ENCODE measurements at regions of chr17 and their contacts with region 1.

Region 1: DNA sequence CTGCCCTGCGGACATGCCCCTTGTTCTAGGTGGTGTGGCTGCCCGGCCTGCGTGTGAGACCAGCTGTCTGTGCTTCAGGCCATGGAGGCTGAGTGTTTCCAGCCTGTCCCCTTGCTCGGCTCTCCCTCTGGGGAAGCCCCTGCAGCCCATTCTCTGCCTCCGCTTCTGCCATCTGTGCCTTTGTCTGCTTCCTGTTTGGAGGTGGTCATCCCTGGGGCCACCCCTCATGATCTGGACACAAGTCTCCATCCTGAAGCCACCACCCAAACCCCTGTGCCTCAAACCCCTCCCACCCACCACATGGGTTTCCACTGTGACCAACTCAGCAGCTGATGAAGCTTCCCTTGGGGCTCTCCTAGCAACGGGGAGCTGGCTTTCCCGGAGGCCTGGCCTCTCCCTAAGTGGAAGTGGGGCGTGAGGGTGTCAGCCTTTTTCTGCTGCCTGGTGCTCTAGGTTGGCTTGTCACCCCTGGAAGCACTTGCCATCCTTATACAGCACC is 184.9 kb downstream of the SEC14L1 start:
- DNase-seq: no peak
- ATAC-seq: peak; percentile 6
- H3K4me3 Mint-ChIP-seq: peak overlapping the region; percentile 92
- H3K27ac Mint-ChIP-seq: peak overlapping the region; percentile 96
- H3K4me1 Mint-ChIP-seq: peaks cover 88% of the 10 kb centered on the region
- H3K27me3 Mint-ChIP-seq: no peaks in the 10 kb centered on the region
- CTCF ChIP-seq: no peak

Region 2: DNA sequence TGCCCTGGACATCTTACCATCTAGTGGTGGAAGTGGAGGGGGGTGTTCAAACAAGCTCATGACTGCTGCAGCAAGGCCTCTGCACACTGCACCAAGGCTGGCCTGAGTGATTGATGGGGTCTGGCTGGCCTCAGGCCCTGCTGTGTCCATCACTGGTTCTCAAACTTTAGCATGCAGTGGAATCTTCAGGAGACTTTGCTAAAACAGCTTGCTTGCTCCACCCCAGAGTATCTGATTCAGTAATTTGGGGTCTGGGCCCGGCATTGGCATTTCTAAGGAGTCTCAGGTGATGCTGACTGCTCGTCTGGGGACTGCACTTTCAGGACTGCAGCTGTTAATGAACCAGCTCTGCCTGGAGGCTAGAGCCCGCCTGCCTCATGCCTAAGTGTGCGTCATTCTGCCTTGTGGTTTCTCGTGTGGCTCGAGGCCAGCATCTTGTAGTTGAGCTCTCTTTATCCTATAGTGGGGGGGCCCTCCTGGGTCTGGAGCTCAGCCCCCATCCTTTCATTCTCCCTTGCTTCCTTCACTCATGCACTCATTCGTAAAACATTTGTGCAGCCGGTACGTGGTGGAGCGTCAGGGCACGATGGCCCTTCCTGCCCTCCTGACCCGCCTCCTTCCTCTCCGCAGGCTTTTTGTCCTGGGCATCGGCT is 453.3 kb before region 1 on chr17:
- CTCF ChIA-PET with region 1: no interaction called
- POLR2A ChIA-PET with region 1: no interaction called
- intact Hi-C with region 1: no loop called
- DNase-seq: no peak
- ATAC-seq: no peak
- H3K4me3 Mint-ChIP-seq: no peak overlapping the region
- H3K27ac Mint-ChIP-seq: no peak overlapping the region
- H3K4me1 Mint-ChIP-seq: peaks cover 10% of the 10 kb centered on the region
- H3K27me3 Mint-ChIP-seq: peaks cover 20% of the 10 kb centered on the region
- CTCF ChIP-seq: no peak

Region 3: DNA sequence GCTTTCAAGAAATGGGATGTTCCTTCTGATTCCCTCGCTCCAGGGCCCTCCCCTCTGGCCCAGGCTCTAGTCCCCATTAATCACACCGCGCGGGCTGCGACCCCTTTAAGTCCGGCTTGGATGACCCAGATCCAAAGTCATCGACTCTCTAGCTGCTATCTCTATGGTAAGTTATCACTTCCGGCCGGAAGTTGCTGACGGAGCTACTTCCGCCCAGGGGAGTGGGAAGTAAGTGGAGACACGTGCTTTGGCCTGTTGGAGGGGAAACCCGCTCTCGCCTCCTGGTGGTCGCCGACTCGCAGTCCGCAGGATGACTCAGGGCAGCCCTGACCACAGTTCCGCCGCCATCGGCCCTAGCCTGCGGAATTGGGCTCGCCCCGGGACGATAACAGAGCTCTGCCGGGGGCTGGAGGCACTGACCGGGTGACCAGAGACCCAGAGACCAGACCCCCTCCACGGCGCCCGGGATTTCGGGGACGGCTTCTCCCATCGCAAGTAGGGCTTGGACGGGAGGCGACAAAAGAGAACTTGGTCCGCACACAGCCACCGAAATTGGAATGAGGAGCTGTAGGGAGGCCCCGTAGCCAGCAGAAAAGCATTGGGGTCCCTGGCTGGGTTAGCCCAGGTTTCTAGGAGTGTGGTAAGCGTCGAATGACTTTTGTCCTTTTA is 237.0 kb before region 1 on chr17:
- CTCF ChIA-PET with region 1: interaction called, 4 read pairs
- POLR2A ChIA-PET with region 1: interaction called, 10 read pairs
- intact Hi-C with region 1: loop called (anchors 1 kb)
- DNase-seq: peak; percentile 84
- ATAC-seq: peak; percentile 89
- H3K4me3 Mint-ChIP-seq: peak overlapping the region; percentile 95
- H3K27ac Mint-ChIP-seq: peak overlapping the region; percentile 95
- H3K4me1 Mint-ChIP-seq: peaks cover 52% of the 10 kb centered on the region
- H3K27me3 Mint-ChIP-seq: peaks cover 3% of the 10 kb centered on the region
- CTCF ChIP-seq: no peak

Region 4: DNA sequence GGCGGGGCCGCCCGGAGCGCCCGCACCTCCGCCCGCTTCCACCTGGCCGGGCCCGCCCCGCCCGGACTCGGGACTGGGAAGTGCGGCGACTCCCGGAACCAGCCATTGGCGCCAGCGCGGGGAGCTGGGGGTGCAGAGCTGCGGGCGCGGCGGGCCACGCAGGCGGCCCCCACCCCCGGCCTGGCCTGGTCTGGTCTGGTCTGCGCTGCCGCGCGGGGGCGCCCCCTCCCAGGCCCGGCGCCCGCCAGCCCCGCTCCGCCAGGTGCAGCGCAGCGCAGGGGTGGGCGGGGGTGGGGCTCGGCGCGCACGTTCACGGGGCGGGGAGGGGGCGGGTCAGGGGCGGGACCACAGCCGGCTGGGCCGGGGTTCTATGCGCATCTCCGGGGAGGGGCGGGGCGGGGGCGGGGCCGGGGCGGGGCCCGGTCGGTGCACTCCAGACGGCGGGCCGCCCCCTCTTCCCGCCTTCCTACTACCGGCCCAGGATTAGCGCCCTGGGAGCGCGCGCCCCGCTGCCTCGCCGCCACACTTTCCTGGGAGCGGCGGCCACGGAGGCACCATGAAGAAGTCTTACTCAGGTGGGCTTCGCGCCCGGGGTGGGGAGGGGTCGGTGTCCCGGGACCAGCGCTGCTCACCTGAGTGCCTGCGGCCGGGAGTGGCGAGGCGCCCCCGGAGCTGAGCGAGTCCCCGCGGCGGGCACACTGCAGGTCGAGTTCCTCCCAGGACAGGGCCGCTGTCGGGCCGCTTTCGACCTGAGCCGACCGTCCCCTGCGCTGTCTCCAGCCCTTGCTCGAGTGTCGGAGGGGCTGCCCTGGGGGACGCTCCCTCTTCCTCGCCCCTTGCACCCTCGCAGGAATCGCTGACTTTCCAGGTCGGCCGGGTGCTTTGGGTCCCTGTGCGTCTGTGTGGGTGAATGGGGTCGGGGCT is 44.4 kb before region 1 on chr17:
- CTCF ChIA-PET with region 1: interaction called, 6 read pairs
- POLR2A ChIA-PET with region 1: interaction called, 23 read pairs
- intact Hi-C with region 1: loop called (anchors 1 kb)
- DNase-seq: peak; percentile 74
- ATAC-seq: peak; percentile 93
- H3K4me3 Mint-ChIP-seq: peak overlapping the region; percentile 82
- H3K27ac Mint-ChIP-seq: peak overlapping the region; percentile 85
- H3K4me1 Mint-ChIP-seq: peaks cover 30% of the 10 kb centered on the region
- H3K27me3 Mint-ChIP-seq: peaks cover 4% of the 10 kb centered on the region
- CTCF ChIP-seq: no peak

Region 5: GRCh38 chr17:77304051-77304745 is 21.4 kb before region 1 on chr17:
- CTCF ChIA-PET with region 1: no interaction called
- POLR2A ChIA-PET with region 1: interaction called, 14 read pairs
- intact Hi-C with region 1: loop called (anchors 2 kb)
- DNase-seq: no peak
- ATAC-seq: no peak
- H3K4me3 Mint-ChIP-seq: no peak overlapping the region
- H3K27ac Mint-ChIP-seq: no peak overlapping the region
- H3K4me1 Mint-ChIP-seq: peaks cover 9% of the 10 kb centered on the region
- H3K27me3 Mint-ChIP-seq: peaks cover 5% of the 10 kb centered on the region
- CTCF ChIP-seq: no peak

Region 6: GRCh38 chr17:77388384-77389311 is 63.0 kb after region 1 on chr17:
- CTCF ChIA-PET with region 1: no interaction called
- POLR2A ChIA-PET with region 1: interaction called, 13 read pairs
- intact Hi-C with region 1: no loop called
- DNase-seq: no peak
- ATAC-seq: no peak
- H3K4me3 Mint-ChIP-seq: peak overlapping the region; percentile 46
- H3K27ac Mint-ChIP-seq: peak overlapping the region; percentile 80
- H3K4me1 Mint-ChIP-seq: peaks cover 43% of the 10 kb centered on the region
- H3K27me3 Mint-ChIP-seq: no peaks in the 10 kb centered on the region
- CTCF ChIP-seq: no peak

Region 7: GRCh38 chr17:77465358-77466041 is 139.9 kb after region 1 on chr17:
- CTCF ChIA-PET with region 1: no interaction called
- POLR2A ChIA-PET with region 1: interaction called, 42 read pairs
- intact Hi-C with region 1: loop called (anchors 1 kb)
- DNase-seq: peak; percentile 62
- ATAC-seq: peak; percentile 81
- H3K4me3 Mint-ChIP-seq: peak overlapping the region; percentile 75
- H3K27ac Mint-ChIP-seq: peak overlapping the region; percentile 93
- H3K4me1 Mint-ChIP-seq: peaks cover 94% of the 10 kb centered on the region
- H3K27me3 Mint-ChIP-seq: no peaks in the 10 kb centered on the region
- CTCF ChIP-seq: no peak

Measured in activated B cell treated with CpG ODN at 0.5 μM for 24 hours (primary cell).